T-cell (primary cell): ENCODE measurements at regions of chr10 and their contacts with region 1.

Region 1: DNA sequence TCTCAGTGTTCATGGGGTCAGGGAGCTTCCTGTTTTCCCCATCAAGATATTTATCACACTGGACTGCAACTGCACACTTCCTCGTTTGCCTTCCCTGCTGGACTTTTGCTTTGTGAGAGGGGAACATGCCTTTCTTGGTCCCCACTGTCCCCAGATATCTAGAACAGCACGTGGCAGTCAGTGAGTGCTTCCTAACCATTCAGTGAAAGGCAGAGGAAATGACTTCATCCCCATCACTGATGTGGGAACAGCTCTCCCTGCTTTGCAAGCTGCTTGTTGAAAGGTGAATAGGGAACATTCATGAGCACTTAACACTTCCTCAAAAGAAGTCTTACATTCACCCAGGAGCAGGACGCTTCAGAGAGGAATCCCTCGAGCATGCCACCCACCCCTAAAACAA is 135.4 kb downstream of the MYOF start:
- DNase-seq: no peak
- ATAC-seq: no peak
- H3K4me3 ChIP-seq: no peak overlapping the region
- H3K4me3 Mint-ChIP-seq: no peak overlapping the region
- H3K27ac ChIP-seq: no peak overlapping the region
- H3K27ac Mint-ChIP-seq: no peak overlapping the region
- H3K4me1 ChIP-seq: no peaks in the 10 kb centered on the region
- H3K4me1 Mint-ChIP-seq: no peaks in the 10 kb centered on the region
- H3K27me3 ChIP-seq: no peaks in the 10 kb centered on the region
- H3K27me3 Mint-ChIP-seq: peaks cover 0 to 4% of the 10 kb centered on the region in 2 donors

Region 2: DNA sequence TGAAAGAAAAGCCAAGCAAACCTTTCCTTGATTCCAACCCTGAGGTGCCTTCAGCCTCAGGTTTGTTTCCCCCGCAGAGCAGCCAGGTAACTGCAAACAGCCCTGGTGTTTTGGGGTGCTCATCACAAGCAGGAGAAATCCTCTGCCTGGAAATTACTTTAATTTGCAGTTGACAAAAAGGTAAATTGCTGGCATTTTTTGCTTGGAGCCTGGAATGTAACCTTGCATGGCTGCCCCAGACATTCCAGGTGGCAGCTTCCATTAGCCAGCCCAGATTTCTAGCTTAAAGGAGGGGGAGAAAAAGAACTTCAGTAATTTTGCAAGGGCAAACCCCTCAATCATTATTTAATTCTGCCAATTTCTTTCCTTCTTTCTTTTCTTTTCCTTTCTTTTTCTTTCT is 58.9 kb before region 1 on chr10:
- CTCF ChIA-PET with region 1: interaction called in 1 of 2 experiments, 12 read pairs
- POLR2A ChIA-PET with region 1: no interaction called
- DNase-seq: no peak
- ATAC-seq: no peak
- H3K4me3 ChIP-seq: no peak overlapping the region
- H3K4me3 Mint-ChIP-seq: no peak overlapping the region
- H3K27ac ChIP-seq: no peak overlapping the region
- H3K27ac Mint-ChIP-seq: no peak overlapping the region
- H3K4me1 ChIP-seq: peaks cover 0 to 2% of the 10 kb centered on the region in 2 experiments
- H3K4me1 Mint-ChIP-seq: no peaks in the 10 kb centered on the region
- H3K27me3 ChIP-seq: peaks cover 0 to 3% of the 10 kb centered on the region in 2 experiments
- H3K27me3 Mint-ChIP-seq: peaks cover 0 to 6% of the 10 kb centered on the region in 2 donors

Region 3: DNA sequence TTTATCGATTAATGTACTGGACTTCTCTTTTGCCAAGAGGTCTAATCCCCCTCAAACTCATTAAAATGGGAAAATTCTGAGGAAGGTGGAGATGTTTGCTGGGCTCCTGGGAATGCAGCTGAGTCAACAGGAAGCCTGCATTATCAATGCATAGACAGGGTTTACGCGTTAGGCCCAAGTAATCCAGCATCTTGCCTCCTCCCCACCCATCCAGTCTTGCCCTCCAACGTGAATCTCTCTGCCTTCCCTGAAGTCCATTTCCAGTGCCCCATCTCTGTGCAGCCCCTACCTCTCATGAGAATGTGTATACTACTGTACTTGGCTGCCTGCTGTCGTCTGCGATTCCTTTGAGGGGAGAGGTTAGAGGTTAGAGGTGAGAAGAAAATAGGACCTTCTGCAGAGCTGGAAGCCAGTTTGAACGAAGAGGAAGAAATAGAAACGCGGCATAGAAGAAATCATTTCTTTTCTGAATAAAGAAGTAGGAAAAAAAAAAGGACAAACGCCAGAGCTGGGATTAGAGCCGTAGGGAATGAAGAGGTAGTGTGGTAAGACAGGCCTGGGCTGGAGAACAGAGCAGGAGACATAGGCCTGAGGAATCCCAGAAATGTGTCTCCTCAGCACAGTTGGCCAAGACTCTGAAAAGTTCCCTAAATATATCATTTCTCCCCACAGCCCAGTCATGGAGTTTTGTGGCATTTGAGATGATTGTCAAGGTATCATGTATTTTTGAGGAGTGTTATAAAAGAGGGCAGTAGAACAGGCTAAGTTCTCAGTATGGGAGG is 59.9 kb after region 1 on chr10:
- CTCF ChIA-PET with region 1: no interaction called
- POLR2A ChIA-PET with region 1: no interaction called
- DNase-seq: no peak
- ATAC-seq: no peak
- H3K4me3 ChIP-seq: no peak overlapping the region
- H3K4me3 Mint-ChIP-seq: no peak overlapping the region
- H3K27ac ChIP-seq: no peak overlapping the region
- H3K27ac Mint-ChIP-seq: no peak overlapping the region
- H3K4me1 ChIP-seq: peaks cover 21 to 28% of the 10 kb centered on the region in 2 experiments
- H3K4me1 Mint-ChIP-seq: peaks cover 32 to 39% (median 36%) of the 10 kb centered on the region in 3 donors
- H3K27me3 ChIP-seq: no peaks in the 10 kb centered on the region
- H3K27me3 Mint-ChIP-seq: no peaks in the 10 kb centered on the region